MCF 10A (cell line): ENCODE measurements at regions of chr3 and their contacts with region 1.

Region 1: DNA sequence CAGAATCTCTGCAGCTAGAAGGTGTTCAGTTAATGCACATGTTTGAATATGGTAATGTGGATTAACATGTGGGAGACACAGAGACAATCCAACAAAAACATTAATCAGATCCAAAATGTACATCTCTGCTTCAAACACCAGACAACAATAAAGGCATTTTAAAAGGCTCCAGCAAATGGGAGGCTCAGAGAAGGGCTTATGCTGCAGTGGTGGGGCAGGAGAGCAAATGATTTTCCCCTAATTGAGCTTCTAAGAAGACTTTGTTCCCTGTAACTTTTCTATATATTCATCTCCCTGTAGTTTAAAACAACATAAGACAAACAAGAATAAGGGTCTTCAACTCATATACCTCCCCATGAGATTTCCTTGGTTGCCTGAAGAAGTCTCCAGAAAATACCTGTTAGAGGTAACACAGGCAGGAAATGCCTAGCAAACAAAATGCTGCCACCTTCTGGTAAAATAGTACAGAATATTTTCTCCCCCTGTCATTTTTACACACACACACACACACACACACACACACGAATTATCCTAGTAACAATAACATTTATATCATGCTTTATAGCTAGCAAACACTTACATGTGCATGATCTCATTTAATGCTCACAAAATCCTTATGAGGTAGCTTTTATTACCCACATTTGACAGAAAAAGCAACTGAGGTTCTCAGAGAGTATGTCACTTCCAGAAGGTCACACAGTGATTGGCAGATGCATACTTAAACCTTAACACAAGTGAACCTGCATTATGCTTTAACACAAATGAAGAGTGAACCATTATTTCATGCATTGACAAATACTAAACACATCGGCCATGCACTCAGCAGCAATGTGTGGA is 123.4 kb upstream of the MB21D2 start:
- DNase-seq: peak; percentile 62
- H3K4me3 Mint-ChIP-seq: no peak overlapping the region
- H3K27ac Mint-ChIP-seq: no peak overlapping the region
- H3K4me1 Mint-ChIP-seq: no peaks in the 10 kb centered on the region
- H3K27me3 Mint-ChIP-seq: no peaks in the 10 kb centered on the region
- CTCF ChIP-seq: peak; percentile 37

Region 2: GRCh38 chr3:192802957-192803899 is 237.8 kb before region 1 on chr3:
- CTCF ChIA-PET with region 1: interaction called, 13 read pairs
- POLR2A ChIA-PET with region 1: no interaction called
- intact Hi-C with region 1: no loop called
- DNase-seq: peak; percentile 49
- H3K4me3 Mint-ChIP-seq: no peak overlapping the region
- H3K27ac Mint-ChIP-seq: no peak overlapping the region
- H3K4me1 Mint-ChIP-seq: no peaks in the 10 kb centered on the region
- H3K27me3 Mint-ChIP-seq: no peaks in the 10 kb centered on the region
- CTCF ChIP-seq: peak; percentile 44

Region 3: GRCh38 chr3:192892981-192893700 is 147.9 kb before region 1 on chr3:
- CTCF ChIA-PET with region 1: interaction called, 11 read pairs
- POLR2A ChIA-PET with region 1: interaction called, 3 read pairs
- intact Hi-C with region 1: no loop called
- DNase-seq: peak; percentile 90
- H3K4me3 Mint-ChIP-seq: peak overlapping the region; percentile 5
- H3K27ac Mint-ChIP-seq: peak overlapping the region; percentile 10
- H3K4me1 Mint-ChIP-seq: peaks cover 30% of the 10 kb centered on the region
- H3K27me3 Mint-ChIP-seq: no peaks in the 10 kb centered on the region
- CTCF ChIP-seq: no peak

Region 4: DNA sequence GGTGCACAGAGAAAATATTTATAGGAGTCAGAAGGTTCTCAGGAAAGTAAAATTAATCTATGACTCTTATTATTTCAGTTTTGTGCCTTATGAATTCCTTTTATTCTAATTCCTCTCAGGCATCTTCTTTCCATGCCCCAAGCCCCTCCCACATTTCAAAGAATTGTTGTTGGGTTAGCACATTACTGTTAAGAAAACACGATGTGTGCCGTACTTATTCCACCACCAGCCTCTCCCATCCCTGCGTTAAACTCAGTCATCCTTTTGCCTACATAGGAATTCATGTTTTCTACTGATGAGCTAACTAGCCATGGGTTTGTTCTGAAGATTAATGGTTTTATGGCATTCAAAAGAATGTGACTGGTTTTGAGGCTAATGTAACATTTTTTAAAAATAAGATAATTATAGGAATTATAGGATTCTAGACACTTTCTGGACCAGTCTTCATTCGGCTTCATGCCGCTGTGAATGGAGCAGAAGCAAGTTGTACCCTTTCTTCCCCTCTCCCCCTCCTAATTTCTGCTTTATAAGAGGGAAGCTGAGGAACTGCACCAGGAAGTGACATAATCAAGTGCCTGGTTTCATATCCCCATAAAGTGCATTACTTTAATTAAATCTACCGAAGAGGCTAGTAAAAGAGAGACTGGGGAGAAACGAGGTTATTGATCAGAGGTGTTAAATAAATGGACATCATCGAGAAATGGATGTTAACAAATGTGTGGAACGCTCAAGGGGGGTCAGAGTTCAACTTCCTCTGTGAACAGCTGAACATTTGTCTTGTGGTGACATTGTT is 111.1 kb before region 1 on chr3:
- CTCF ChIA-PET with region 1: interaction called, 11 read pairs
- POLR2A ChIA-PET with region 1: no interaction called
- intact Hi-C with region 1: no loop called
- DNase-seq: no peak
- H3K4me3 Mint-ChIP-seq: no peak overlapping the region
- H3K27ac Mint-ChIP-seq: no peak overlapping the region
- H3K4me1 Mint-ChIP-seq: peaks cover 6% of the 10 kb centered on the region
- H3K27me3 Mint-ChIP-seq: no peaks in the 10 kb centered on the region
- CTCF ChIP-seq: no peak

Region 5: GRCh38 chr3:193016437-193016901 is 24.6 kb before region 1 on chr3:
- CTCF ChIA-PET with region 1: interaction called, 16 read pairs
- POLR2A ChIA-PET with region 1: no interaction called
- intact Hi-C with region 1: no loop called
- DNase-seq: peak; percentile 60
- H3K4me3 Mint-ChIP-seq: no peak overlapping the region
- H3K27ac Mint-ChIP-seq: peak overlapping the region; percentile 55
- H3K4me1 Mint-ChIP-seq: peaks cover 9% of the 10 kb centered on the region
- H3K27me3 Mint-ChIP-seq: no peaks in the 10 kb centered on the region
- CTCF ChIP-seq: no peak

Region 6: GRCh38 chr3:193028258-193028657 is 12.8 kb before region 1 on chr3:
- CTCF ChIA-PET with region 1: interaction called, 18 read pairs
- POLR2A ChIA-PET with region 1: no interaction called
- intact Hi-C with region 1: no loop called
- DNase-seq: no peak
- H3K4me3 Mint-ChIP-seq: no peak overlapping the region
- H3K27ac Mint-ChIP-seq: no peak overlapping the region
- H3K4me1 Mint-ChIP-seq: no peaks in the 10 kb centered on the region
- H3K27me3 Mint-ChIP-seq: no peaks in the 10 kb centered on the region
- CTCF ChIP-seq: no peak

Region 7: GRCh38 chr3:193347521-193348501 is 306.8 kb after region 1 on chr3:
- CTCF ChIA-PET with region 1: no interaction called
- POLR2A ChIA-PET with region 1: no interaction called
- intact Hi-C with region 1: no loop called
- DNase-seq: no peak
- H3K4me3 Mint-ChIP-seq: no peak overlapping the region
- H3K27ac Mint-ChIP-seq: no peak overlapping the region
- H3K4me1 Mint-ChIP-seq: no peaks in the 10 kb centered on the region
- H3K27me3 Mint-ChIP-seq: peaks cover 29% of the 10 kb centered on the region
- CTCF ChIP-seq: no peak

Region 8: GRCh38 chr3:193572426-193572908 is 531.4 kb after region 1 on chr3:
- CTCF ChIA-PET with region 1: interaction called, 10 read pairs
- POLR2A ChIA-PET with region 1: no interaction called
- intact Hi-C with region 1: loop called (anchors 5 kb)
- DNase-seq: peak; percentile 80
- H3K4me3 Mint-ChIP-seq: no peak overlapping the region
- H3K27ac Mint-ChIP-seq: no peak overlapping the region
- H3K4me1 Mint-ChIP-seq: peaks cover 10% of the 10 kb centered on the region
- H3K27me3 Mint-ChIP-seq: peaks cover 13% of the 10 kb centered on the region
- CTCF ChIP-seq: peak; percentile 78